Activated T-helper 1 cell treated with anti-CD3 and anti-CD28 coated beads, Interleukin-12 subunit alpha, Interleukin-12 subunit beta, Interleukin-2, Interleukin-4 antibody, amounts not matched to agents 30 ng/mL and 10 ng/mL and 1 ng/mL, durations not matched to agents 14 hours and 24 hours and 36 hours (primary cell): ENCODE measurements at regions of chr11 and their contacts with region 1.

Region 1: DNA sequence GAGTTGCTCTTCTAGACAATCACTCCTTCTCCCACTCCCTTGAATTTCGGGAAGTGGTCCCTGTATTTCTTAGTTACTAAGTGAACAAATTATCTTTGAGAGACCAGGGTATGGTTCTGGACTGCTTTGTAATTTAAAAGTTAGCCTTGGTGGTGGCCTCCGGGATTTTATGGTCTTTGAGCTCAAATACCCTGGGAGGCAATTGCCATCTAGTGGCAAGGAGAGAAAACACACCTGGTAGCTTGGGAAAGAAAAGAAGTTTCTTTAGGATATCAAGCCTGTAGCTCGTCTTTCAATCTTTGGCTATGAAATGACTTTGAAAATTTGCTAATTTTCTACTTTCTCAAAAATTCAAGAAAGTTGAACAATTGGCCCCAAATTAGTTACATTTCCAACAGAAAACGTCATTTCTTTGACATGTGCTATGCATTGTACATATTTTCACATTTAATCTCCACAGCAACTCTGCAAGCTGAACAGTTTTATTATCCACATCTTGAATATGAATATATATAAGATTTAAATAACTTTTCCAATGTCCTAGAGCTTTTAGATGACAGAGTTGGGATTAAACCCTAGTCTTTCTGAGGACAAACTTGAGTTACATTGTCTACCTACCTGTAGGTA is 39.1 kb downstream of the MMP27 start:
- DNase-seq: no peak
- H3K4me3 Mint-ChIP-seq: no peak overlapping the region
- H3K27ac Mint-ChIP-seq: no peak overlapping the region
- H3K4me1 Mint-ChIP-seq: no peaks in the 10 kb centered on the region
- H3K27me3 Mint-ChIP-seq: peaks cover 7% of the 10 kb centered on the region

Region 2: GRCh38 chr11:102287964-102288724 is 378.3 kb before region 1 on chr11:
- intact Hi-C with region 1: loop called (anchors 1 kb)
- DNase-seq: peak; percentile 24
- H3K4me3 Mint-ChIP-seq: peak overlapping the region; percentile 8
- H3K27ac Mint-ChIP-seq: peak overlapping the region; percentile 35
- H3K4me1 Mint-ChIP-seq: peaks cover 39% of the 10 kb centered on the region
- H3K27me3 Mint-ChIP-seq: no peaks in the 10 kb centered on the region

Region 3: DNA sequence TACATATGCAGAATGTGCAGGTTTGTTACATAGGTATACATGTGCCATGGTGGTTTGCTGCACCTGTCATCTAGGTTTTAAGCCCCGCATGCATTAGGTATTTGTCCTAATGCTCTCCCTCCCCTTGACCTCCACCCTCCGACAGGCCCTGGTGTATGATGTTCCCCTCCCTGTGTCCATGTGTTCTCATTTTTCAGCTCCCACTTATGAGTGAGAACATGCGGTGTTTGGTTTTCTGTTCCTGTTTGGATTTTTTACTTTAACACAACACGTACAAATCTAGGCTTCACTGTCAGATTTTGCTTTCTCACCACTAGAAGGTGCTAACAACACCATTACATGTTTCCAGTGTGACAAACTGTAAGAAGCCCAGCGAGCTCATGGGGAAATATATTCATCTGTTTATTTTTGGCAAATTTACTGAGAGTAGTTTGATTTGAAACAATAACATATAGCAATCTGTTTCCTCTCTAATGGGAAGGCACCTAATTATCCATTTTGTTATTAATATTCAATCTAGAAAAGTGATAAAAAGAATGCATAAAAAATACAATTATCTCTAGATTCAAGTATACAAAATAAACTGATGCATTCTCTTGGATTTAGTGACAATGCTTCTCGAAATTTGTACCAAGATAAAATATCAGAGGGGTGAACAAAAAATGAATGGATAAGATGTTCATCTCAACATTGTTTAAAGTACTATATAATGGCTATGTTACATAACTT is 372.4 kb before region 1 on chr11:
- intact Hi-C with region 1: loop called (anchors 1 kb)
- DNase-seq: no peak
- H3K4me3 Mint-ChIP-seq: peak overlapping the region; percentile 84
- H3K27ac Mint-ChIP-seq: peak overlapping the region; percentile 90
- H3K4me1 Mint-ChIP-seq: peaks cover 41% of the 10 kb centered on the region
- H3K27me3 Mint-ChIP-seq: no peaks in the 10 kb centered on the region

Region 4: GRCh38 chr11:102341844-102342318 is 324.6 kb before region 1 on chr11:
- intact Hi-C with region 1: loop called (anchors 1 kb)
- DNase-seq: peak; percentile 55
- H3K4me3 Mint-ChIP-seq: no peak overlapping the region
- H3K27ac Mint-ChIP-seq: no peak overlapping the region
- H3K4me1 Mint-ChIP-seq: peaks cover 35% of the 10 kb centered on the region
- H3K27me3 Mint-ChIP-seq: no peaks in the 10 kb centered on the region

Region 5: GRCh38 chr11:102367364-102367763 is 299.1 kb before region 1 on chr11:
- intact Hi-C with region 1: loop called (anchors 2 kb)
- DNase-seq: no peak
- H3K4me3 Mint-ChIP-seq: no peak overlapping the region
- H3K27ac Mint-ChIP-seq: no peak overlapping the region
- H3K4me1 Mint-ChIP-seq: peaks cover 26% of the 10 kb centered on the region
- H3K27me3 Mint-ChIP-seq: no peaks in the 10 kb centered on the region

Region 6: GRCh38 chr11:102390667-102391465 is 275.6 kb before region 1 on chr11:
- intact Hi-C with region 1: loop called (anchors 5 kb)
- DNase-seq: peak; percentile 36
- H3K4me3 Mint-ChIP-seq: no peak overlapping the region
- H3K27ac Mint-ChIP-seq: no peak overlapping the region
- H3K4me1 Mint-ChIP-seq: peaks cover 52% of the 10 kb centered on the region
- H3K27me3 Mint-ChIP-seq: no peaks in the 10 kb centered on the region

Region 7: GRCh38 chr11:103737747-103738146 is 1071.3 kb after region 1 on chr11:
- intact Hi-C with region 1: no loop called
- DNase-seq: no peak
- H3K4me3 Mint-ChIP-seq: no peak overlapping the region
- H3K27ac Mint-ChIP-seq: no peak overlapping the region
- H3K4me1 Mint-ChIP-seq: peaks cover 6% of the 10 kb centered on the region
- H3K27me3 Mint-ChIP-seq: no peaks in the 10 kb centered on the region